HCT116 (cell line): ENCODE measurements at regions of chr1 and their contacts with region 1.

Region 1: DNA sequence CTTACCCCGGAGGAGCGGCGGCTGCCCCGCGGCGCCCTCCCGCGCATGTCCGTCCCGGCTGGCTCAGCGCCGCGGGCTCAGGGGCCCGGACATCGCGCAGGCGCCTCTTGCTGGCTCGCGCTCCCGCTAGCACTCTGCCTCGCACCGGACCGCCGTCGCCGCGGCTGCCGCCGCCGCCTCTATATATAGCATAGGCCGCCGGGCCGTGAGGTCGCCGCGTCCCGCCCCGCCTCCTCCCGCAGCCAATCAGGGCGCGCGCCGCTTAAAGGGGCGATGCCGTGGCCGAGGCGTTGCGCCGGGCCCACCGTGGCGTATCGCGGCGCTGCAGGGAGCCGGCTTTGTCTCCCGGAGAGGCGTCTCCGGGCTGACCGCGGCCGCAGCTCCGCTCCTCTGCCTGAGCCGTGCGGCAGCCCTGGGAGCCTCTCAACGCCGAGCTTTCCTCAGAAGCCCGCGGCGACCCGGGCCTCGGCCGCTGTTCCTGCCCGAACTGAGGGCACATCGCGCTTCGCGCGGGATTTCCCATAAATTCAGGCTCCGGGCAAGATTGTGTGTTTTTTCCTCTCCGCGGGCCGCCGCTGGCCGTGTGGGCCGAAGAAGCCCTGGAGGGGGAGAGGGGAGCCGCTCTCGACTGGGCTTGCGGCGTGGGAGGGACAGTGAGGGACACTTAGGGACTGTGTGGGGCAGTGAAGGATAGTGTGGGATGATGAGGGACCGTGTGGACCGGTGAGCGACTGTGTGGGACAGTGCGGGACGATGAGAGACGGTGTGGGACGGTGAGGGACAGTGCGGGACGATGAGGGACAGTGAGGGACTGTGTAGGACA is at the start of gene ERRFI1:
- DNase-seq: peak; percentile 83
- ATAC-seq: peak; percentile 74
- H3K4me3 ChIP-seq: peak within 1 kb of the TSS; percentile 88 to 93
- H3K27ac ChIP-seq: peak within 1 kb of the TSS; percentile 99
- H3K4me1 ChIP-seq: peaks cover 64 to 87% of the 10 kb centered on the region in 2 experiments
- H3K27me3 ChIP-seq: no peaks in the 10 kb centered on the region
- CTCF ChIP-seq: no peak
- POLR2A ChIP-seq: peak; percentile 96
- RAD21 ChIP-seq: no peak
- total RNA-seq, gene ERRFI1: 777 TPM

Region 2: GRCh38 chr1:8040586-8040985 is 14.2 kb after region 1 on chr1:
- CTCF ChIA-PET with region 1: interaction called, 5 read pairs
- POLR2A ChIA-PET with region 1: interaction called, 24 read pairs
- RAD21 ChIA-PET with region 1: no interaction called
- intact Hi-C with region 1: no loop called
- DNase-seq: peak; percentile 99
- ATAC-seq: peak; percentile 81
- H3K4me3 ChIP-seq: no peak overlapping the region
- H3K27ac ChIP-seq: peak overlapping the region; percentile 96
- H3K4me1 ChIP-seq: peaks cover 79 to 89% of the 10 kb centered on the region in 2 experiments
- H3K27me3 ChIP-seq: no peaks in the 10 kb centered on the region
- CTCF ChIP-seq: no peak
- POLR2A ChIP-seq: no peak
- RAD21 ChIP-seq: peak; percentile 45

Region 3: DNA sequence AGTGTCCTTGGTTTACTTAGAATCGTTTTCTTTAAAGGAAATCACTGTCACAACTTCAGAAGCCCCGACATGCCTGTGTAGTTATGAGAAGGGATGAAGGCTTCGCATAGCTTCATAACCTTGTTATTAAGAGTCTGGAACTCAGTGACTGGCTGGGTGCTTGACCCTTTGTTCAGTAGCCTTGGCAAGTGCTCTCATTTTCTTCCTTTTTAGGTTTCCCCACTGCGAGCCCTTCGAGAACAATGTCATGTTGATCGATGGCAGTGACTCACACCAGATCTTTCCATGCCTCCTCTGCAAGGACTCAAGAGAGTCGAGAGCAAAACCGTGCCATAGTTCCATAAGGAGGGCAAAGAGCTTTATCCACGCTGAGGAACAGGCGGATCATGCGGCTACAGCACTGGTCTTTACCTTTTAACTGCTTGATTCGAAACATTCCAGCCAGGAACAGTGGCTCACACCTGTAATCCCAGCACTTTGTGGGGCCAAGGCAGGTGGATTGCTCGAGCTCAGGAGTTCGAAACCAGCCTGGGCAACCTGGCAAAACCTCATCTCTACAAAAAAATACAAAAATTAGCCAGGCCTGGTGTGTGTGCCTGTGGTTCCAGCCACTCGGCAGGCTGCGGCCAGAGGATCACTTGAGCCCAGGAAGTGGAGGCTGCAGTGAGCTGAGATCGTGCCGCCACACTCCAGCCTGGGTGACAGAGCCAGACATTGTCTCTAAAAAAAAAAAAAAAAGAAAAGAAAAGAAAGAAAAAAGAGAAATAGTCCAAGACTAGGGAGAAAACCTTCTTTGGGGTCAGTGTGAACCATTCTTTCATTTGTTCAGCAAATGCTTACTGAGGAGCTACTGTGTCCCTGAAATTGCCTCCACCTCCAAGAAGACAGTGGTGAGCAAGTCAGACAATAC is 95.2 kb after region 1 on chr1:
- CTCF ChIA-PET with region 1: no interaction called
- POLR2A ChIA-PET with region 1: interaction called, 13 read pairs
- RAD21 ChIA-PET with region 1: interaction called in 1 of 2 experiments, 3 read pairs
- intact Hi-C with region 1: no loop called
- DNase-seq: peak; percentile 95
- ATAC-seq: peak; percentile 65
- H3K4me3 ChIP-seq: peak overlapping the region in 1 of 2 experiments; percentile 15; a peak in 1 of 4 replicates
- H3K27ac ChIP-seq: peak overlapping the region; percentile 99
- H3K4me1 ChIP-seq: peaks cover 72 to 83% of the 10 kb centered on the region in 2 experiments
- H3K27me3 ChIP-seq: no peaks in the 10 kb centered on the region
- CTCF ChIP-seq: no peak
- POLR2A ChIP-seq: no peak
- RAD21 ChIP-seq: no peak

Region 4: DNA sequence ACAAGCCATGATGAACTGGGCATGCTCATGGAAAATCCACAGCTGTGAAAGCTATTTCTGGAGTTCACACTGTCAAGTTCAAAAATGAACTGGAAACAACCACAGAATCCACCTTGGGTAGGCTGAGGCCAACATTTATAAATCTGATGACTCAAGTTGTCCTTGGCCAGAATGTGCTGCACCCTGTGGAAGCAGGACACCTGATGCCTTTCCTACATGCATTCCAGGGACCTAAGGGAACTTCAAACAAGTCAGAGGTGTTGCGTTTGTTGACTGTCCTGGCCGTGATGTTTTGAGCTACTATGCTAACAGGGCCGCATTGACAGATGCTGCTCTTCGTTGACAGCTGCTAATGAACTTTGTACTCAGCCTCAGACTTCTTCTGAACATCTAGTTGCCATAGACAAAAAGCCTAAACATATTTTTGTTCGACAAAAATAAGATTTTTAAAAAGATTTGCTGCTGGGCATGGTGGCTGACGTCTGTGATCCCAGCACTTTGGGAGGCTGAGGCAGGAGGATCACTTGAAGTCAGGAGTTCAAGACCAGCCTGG is 163.6 kb after region 1 on chr1:
- CTCF ChIA-PET with region 1: interaction called, 5 read pairs
- POLR2A ChIA-PET with region 1: interaction called, 19 read pairs
- RAD21 ChIA-PET with region 1: no interaction called
- intact Hi-C with region 1: loop called (anchors 1 kb)
- DNase-seq: peak; percentile 91
- ATAC-seq: peak; percentile 74
- H3K4me3 ChIP-seq: no peak overlapping the region
- H3K27ac ChIP-seq: peak overlapping the region; percentile 91
- H3K4me1 ChIP-seq: peaks cover 78 to 87% of the 10 kb centered on the region in 2 experiments
- H3K27me3 ChIP-seq: no peaks in the 10 kb centered on the region
- CTCF ChIP-seq: no peak
- POLR2A ChIP-seq: no peak
- RAD21 ChIP-seq: no peak